ENCODE measurements at regions of chr22 and their contacts with region 1.

Region 1: DNA sequence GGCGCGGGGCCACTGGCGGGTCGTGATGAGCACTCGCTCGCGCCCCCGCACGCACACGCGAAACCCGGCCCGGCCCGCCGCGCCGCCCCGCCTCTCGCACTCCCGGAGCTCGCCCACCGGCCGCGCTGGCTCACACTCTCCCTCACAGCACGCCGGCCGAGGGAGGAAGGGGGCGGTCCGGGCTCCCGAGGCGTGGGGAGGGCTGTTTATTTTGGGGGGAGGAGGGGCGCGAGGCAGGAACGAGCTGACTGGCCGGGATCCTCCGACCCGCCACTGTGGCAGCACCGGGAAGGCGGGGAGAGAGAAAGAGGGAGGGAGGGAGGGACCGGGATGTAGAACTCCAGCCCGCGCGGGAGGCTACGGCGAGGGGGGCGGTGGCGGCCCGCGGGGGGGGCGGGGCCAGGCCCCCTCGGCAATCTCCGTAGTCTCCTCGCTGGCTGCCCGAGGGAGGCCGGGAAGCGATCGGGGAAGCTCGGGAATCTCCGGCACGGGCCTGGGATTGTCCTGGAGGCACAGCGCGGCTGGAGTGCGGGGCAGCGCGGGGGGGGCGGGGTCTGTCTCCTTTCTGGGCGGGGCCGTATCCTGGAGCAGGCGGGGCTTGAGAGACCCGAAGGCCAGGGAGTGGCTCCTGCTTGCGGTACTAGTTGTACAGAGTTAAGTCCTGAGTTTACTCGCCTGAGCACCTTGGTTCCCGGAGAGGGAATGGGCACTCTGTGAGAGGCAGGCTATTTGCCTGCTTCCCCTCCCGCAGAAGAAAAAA is at the start of gene RBFOX2:
- DNase-seq: peak; percentile 71
- ATAC-seq: peak; percentile 80
- H3K4me3 Mint-ChIP-seq: peak within 1 kb of the TSS; percentile 88
- H3K27ac Mint-ChIP-seq: peak within 1 kb of the TSS; percentile 47
- H3K4me1 Mint-ChIP-seq: peaks cover 19% of the 10 kb centered on the region
- H3K27me3 Mint-ChIP-seq: peaks cover 45% of the 10 kb centered on the region
- total RNA-seq, gene RBFOX2: 0.36 to 1.1 TPM

Region 2: DNA sequence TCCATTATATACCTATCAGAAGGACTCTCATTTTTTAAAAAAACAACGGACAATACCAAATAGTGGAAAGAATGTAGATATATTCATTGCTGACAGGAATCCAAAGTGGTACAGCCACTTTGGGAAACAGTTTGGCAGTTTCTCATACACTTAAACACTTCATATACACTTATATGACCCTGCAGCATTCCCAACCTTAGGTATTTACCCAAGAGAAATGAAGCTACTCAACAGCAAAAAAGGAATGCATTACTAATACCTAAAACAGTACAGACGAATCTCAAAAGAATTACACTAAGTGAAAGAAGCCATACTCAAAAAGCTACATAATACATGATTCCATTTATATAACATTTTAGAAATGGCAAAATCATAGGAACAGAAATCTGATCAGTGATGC is 51.7 kb before region 1 on chr22:
- POLR2A ChIA-PET with region 1: interaction called, 10 read pairs
- DNase-seq: no peak
- ATAC-seq: no peak
- H3K4me3 Mint-ChIP-seq: no peak overlapping the region
- H3K27ac Mint-ChIP-seq: no peak overlapping the region
- H3K4me1 Mint-ChIP-seq: no peaks in the 10 kb centered on the region
- H3K27me3 Mint-ChIP-seq: peaks cover 11% of the 10 kb centered on the region

Region 3: GRCh38 chr22:35997438-35997837 is 31.4 kb before region 1 on chr22:
- POLR2A ChIA-PET with region 1: no interaction called
- DNase-seq: no peak
- ATAC-seq: no peak
- H3K4me3 Mint-ChIP-seq: no peak overlapping the region
- H3K27ac Mint-ChIP-seq: no peak overlapping the region
- H3K4me1 Mint-ChIP-seq: peaks cover 2% of the 10 kb centered on the region
- H3K27me3 Mint-ChIP-seq: peaks cover 8% of the 10 kb centered on the region

Measured in activated naive CD8-positive, alpha-beta T cell treated with anti-CD3 and anti-CD28 coated beads, Interleukin-2, amount 10 ng/mL, durations not matched to agents 7 days and 5 days (primary cell).